Dorsolateral prefrontal cortex (tissue), 120 donors: ENCODE measurements at regions of chr1 and their contacts with region 1.

Region 1: DNA sequence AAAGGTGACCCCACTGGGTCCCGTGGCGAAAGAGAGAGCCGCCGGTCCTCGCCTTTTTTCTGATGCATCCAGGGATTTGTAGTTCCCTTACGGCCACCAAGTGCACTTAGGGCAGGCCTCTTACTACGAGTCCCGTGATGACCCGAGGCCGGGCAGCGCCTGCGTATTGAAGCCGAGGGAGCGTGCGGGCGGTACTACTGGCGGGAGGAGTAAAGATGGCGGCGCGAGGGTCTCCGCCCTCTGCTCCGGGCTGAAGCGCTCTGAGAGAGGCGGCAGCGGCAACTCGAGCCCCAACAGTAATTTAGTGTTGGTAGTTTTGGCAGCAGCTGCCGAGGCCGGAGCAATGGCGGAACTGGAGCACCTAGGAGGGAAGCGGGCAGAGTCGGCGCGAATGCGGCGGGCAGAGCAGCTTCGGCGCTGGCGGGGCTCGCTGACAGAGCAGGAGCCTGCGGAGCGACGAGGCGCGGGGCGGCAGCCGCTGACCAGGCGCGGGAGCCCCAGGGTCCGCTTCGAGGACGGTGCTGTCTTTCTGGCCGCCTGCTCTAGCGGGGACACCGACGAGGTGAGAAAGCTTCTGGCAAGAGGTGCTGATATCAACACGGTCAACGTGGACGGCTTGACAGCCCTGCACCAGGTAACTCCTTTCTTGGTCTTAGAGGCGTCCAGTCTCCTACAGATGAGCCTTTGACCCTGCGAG is at the start of gene PPP1R12B:
- DNase-seq: peak; percentile 97 to 100 (median 99)
- H3K4me3 ChIP-seq: peak within 1 kb of the TSS; percentile 73 to 100 (median 98)
- H3K27ac ChIP-seq: peak within 1 kb of the TSS; percentile 57 to 97 (median 87)
- H3K27me3 ChIP-seq: no peaks in the 10 kb centered on the region
- CTCF ChIP-seq: peak in 44 of 56 donors; percentile 8 to 65 (median 34)
- total RNA-seq, gene PPP1R12B: 81.3 to 162 (median 110) TPM

Region 2: GRCh38 chr1:201481761-201482493 is 866.7 kb before region 1 on chr1:
- intact Hi-C with region 1: no loop called
- DNase-seq: peak; percentile 45 to 93 (median 86)
- H3K4me3 ChIP-seq: peak overlapping the region in 49 of 59 donors; percentile 1 to 61 (median 41)
- H3K27ac ChIP-seq: peak overlapping the region; percentile 27 to 100 (median 89)
- H3K27me3 ChIP-seq: peaks cover 0 to 9% (median 0%) of the 10 kb centered on the region in 45 donors
- CTCF ChIP-seq: peak; percentile 59 to 99 (median 95)

Region 3: GRCh38 chr1:201970334-201971159 is 378.1 kb before region 1 on chr1:
- intact Hi-C with region 1: no loop called
- DNase-seq: peak in 4 of 10 donors; percentile 25 to 69 (median 36)
- H3K4me3 ChIP-seq: no peak overlapping the region
- H3K27ac ChIP-seq: peak overlapping the region in 38 of 59 donors; percentile 1 to 71 (median 38)
- H3K27me3 ChIP-seq: no peaks in the 10 kb centered on the region
- CTCF ChIP-seq: no peak

Region 4: GRCh38 chr1:202397256-202397655 is 48.6 kb after region 1 on chr1:
- intact Hi-C with region 1: loop called in 1 of 2 experiments (anchors 5 kb)
- DNase-seq: peak in 1 of 10 donors; percentile 48
- H3K4me3 ChIP-seq: no peak overlapping the region
- H3K27ac ChIP-seq: peak overlapping the region in 34 of 59 donors; percentile 0 to 79 (median 54)
- H3K27me3 ChIP-seq: no peaks in the 10 kb centered on the region
- CTCF ChIP-seq: no peak

Region 5: DNA sequence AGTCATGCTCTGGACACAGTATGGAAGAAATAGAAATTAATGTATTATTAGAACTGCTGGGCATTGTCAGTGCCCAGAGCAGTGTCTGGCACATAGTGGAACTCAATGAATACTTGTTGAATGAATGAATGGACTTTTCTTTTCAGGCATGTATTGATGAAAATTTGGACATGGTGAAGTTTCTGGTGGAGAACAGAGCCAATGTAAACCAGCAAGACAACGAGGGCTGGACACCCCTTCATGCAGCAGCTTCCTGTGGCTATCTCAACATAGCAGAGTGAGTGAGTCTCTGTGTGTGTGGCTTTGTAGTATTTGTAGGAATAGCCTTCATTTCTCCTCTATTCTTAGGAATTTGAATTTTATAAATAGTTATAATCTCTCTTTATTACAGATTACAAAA is 68.0 kb after region 1 on chr1:
- intact Hi-C with region 1: loop called in 1 of 2 experiments (anchors 5 kb)
- DNase-seq: peak in 1 of 10 donors; percentile 51
- H3K4me3 ChIP-seq: peak overlapping the region in 10 of 59 donors; percentile 5 to 55 (median 24)
- H3K27ac ChIP-seq: peak overlapping the region in 58 of 59 donors; percentile 26 to 97 (median 85)
- H3K27me3 ChIP-seq: no peaks in the 10 kb centered on the region
- CTCF ChIP-seq: peak in 1 of 56 donors; percentile 9

Region 6: DNA sequence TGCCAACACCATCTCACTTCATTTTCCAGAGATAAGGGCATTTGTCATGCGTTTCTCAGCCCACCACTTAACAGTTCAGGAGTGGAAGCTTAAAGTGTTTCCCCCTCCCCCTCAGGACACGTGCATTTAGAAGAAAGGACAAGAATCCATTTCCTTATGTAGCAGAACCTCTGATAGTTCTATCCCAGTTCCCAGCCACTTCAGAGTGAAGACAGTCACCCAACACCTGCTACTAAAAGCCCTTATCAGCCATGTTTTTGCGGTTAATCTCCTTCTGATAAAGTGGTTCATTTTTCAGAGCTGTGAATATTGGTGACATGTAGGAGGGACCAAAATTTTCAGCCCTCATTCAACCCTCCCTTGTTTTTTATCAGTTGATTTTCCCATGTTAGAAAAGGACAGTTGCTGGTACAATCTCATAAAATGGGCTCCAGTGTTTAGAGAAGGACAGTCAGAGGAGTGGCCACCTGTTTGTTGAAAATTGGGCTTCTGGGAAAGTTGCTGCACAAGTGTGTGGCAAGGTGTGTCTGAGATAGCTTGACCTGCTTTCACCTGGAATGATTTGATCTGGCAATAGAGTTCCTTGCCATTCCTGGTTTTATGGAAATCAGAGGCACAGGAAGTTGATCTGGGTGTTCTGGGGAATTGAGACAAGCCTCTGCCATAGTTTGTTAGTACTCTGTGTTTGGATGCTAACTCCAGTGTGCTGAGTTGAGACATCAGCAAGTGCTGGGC is 113.9 kb after region 1 on chr1:
- intact Hi-C with region 1: loop called in 1 of 2 experiments (anchors 2 kb)
- DNase-seq: no peak
- H3K4me3 ChIP-seq: no peak overlapping the region
- H3K27ac ChIP-seq: peak overlapping the region in 15 of 59 donors; percentile 4 to 55 (median 29)
- H3K27me3 ChIP-seq: no peaks in the 10 kb centered on the region
- CTCF ChIP-seq: no peak

Region 7: GRCh38 chr1:202540014-202540413 is 191.4 kb after region 1 on chr1:
- intact Hi-C with region 1: no loop called
- DNase-seq: no peak
- H3K4me3 ChIP-seq: peak overlapping the region in 30 of 59 donors; percentile 1 to 52 (median 22)
- H3K27ac ChIP-seq: peak overlapping the region in 26 of 59 donors; percentile 0 to 69 (median 36)
- H3K27me3 ChIP-seq: no peaks in the 10 kb centered on the region
- CTCF ChIP-seq: no peak

Region 8: GRCh38 chr1:202571347-202572339 is 223.0 kb after region 1 on chr1:
- intact Hi-C with region 1: loop called in 1 of 2 experiments (anchors 5 kb)
- DNase-seq: peak in 4 of 10 donors; percentile 16 to 57 (median 36)
- H3K4me3 ChIP-seq: no peak overlapping the region
- H3K27ac ChIP-seq: peak overlapping the region in 6 of 59 donors; percentile 2 to 47 (median 32)
- H3K27me3 ChIP-seq: no peaks in the 10 kb centered on the region
- CTCF ChIP-seq: peak; percentile 42 to 96 (median 81)

Region 9: GRCh38 chr1:202599677-202600431 is 251.2 kb after region 1 on chr1:
- intact Hi-C with region 1: loop called in 1 of 2 experiments (anchors 10 kb)
- DNase-seq: peak in 9 of 10 donors; percentile 42 to 67 (median 56)
- H3K4me3 ChIP-seq: no peak overlapping the region
- H3K27ac ChIP-seq: no peak overlapping the region
- H3K27me3 ChIP-seq: no peaks in the 10 kb centered on the region
- CTCF ChIP-seq: peak in 55 of 56 donors; percentile 38 to 77 (median 62)

Region 10: GRCh38 chr1:202710070-202711045 is 361.7 kb after region 1 on chr1 and contains the start of gene SYT2:
- intact Hi-C with region 1: loop called in 1 of 2 experiments (anchors 10 kb)
- DNase-seq: peak in 4 of 10 donors; percentile 41 to 78 (median 48)
- H3K4me3 ChIP-seq: peak within 1 kb of the TSS in 58 of 59 donors; percentile 21 to 67 (median 50)
- H3K27ac ChIP-seq: peak within 1 kb of the TSS in 1 of 59 donors; percentile 73
- H3K27me3 ChIP-seq: peaks cover 0 to 50% (median 24%) of the 10 kb centered on the region in 45 donors
- CTCF ChIP-seq: no peak
- total RNA-seq, gene SYT2: 4.0 to 107 (median 27.1) TPM